ENCODE measurements at regions of chr4 and their contacts with region 1.

Region 1: DNA sequence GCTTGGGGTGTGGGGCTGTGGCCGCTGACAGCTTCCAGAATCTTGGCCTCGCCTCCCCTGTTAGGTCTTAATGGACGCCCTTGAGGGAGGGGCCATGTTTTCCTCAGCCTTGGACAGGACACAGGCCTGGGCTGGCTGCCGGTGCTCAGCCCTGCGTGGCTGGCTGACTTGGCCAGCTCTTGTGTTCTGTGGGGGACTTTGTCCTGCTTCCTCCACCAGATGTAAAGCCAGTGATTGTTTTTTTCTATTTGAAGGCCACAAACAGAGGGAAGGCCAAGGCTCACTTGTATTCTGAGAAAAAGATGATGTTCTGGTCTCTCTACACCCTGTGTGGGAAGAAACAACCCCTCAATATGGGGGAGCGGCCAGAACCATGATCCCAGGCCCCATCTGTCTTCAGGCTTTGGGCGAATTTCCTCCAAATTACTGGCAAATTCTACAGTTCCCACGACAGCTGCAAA is 71.3 kb downstream of the HTRA3 start:
- DNase-seq: peak; percentile 18 to 92 (median 58)

Region 2: GRCh38 chr4:7956311-7956808 is 384.5 kb before region 1 on chr4:
- intact Hi-C with region 1: no loop called
- DNase-seq: peak in 6 of 10 donors; percentile 50 to 91 (median 64)

Region 3: GRCh38 chr4:8393593-8394038 is 52.8 kb after region 1 on chr4:
- intact Hi-C with region 1: loop called (anchors 2 kb)
- DNase-seq: peak in 6 of 10 donors; percentile 36 to 91 (median 59)

Region 4: GRCh38 chr4:8504279-8505007 is 163.6 kb after region 1 on chr4:
- intact Hi-C with region 1: no loop called
- DNase-seq: peak in 2 of 10 donors; percentile 80 to 83